ENCODE measurements at regions of chr13 and their contacts with region 1.

Region 1: DNA sequence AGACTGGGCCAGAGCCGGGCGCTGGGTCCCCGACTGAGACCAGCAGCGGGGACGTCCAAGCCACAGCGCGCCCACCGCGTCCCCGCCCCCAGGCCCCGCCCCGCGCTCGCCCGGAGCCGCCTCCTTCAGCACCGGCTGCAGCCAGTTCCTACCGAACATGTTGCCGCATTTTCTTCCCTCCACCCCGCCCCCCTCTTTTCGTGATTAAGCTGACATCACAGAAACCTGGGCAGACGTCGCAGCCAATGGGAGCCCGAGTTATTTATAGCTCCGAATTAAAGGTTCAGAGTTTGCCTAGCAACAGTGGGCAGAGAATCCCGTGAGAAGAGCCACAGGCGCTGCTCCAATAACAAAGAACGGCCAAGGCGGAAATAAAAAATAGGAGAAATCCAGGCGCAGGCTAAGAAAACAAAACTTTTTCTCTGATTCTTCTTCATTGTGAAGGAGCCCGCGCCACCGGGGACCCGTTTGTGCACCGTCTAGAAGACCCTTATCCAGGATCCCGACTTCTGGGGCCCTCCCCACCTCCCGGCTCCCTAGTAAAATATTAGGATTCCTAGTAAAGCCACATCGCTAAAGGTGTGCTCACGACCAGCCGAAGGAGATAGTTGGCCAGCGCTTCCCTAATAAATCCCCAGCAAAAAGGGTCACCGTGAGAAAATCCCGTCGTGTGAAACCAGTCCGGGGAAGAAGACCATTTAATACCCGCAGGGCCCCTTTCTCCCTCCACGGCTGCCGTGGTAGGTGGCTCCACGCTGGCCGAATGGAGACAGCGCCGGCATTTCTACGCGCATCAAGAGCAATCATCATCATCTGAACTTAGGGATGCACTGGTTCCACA is 61.7 kb downstream of the SERP2 start:
- DNase-seq: peak; percentile 83 to 94 (median 88)
- ATAC-seq: peak; percentile 90
- H3K4me3 ChIP-seq: peak overlapping the region; percentile 55
- H3K27ac ChIP-seq: peak overlapping the region; percentile 90
- H3K4me1 ChIP-seq: peaks cover 7 to 8% of the 10 kb centered on the region in 2 experiments; a peak in 3 of 5 replicates
- H3K27me3 ChIP-seq: no peaks in the 10 kb centered on the region
- CTCF ChIP-seq: no peak
- EP300 ChIP-seq: peak; percentile 37; the same call in 1 of the 2 replicates
- POLR2A ChIP-seq: peak; percentile 43; the same call in 1 of the 2 replicates
- RAD21 ChIP-seq: no peak

Region 2: DNA sequence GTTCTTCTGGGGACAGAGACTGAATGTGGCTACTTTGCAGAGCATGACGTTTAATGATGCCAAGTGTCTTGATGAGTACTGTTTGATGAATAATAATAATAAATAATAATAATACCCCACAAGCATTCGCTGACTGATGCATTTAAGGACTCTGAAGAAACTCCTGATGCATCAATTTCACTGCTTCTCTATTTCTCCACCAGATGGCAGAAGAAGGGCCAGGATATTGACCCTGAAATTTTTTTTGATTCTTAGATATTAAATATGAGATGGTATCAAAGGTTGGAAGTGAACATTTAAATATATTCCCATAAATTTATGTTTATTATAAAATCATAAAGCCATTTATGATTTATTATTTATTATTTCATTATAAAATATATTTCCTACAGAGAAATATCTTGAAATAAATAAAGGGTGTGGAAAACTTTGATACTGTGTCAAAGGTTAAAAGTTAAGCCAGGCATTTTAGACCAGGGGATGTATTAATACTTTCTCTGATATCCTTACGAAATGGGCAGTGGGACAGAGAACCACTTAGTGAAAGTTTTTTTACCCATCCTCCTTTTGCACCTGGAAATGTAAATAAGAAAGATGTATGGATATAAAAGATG is 384.8 kb before region 1 on chr13:
- CTCF ChIA-PET with region 1: interaction called, 13 read pairs
- POLR2A ChIA-PET with region 1: interaction called, 3 read pairs
- in situ Hi-C with region 1: no loop called
- intact Hi-C with region 1: no loop called
- DNase-seq: peak in 3 of 4 experiments; percentile 4 to 6 (median 6)
- ATAC-seq: no peak
- H3K4me3 ChIP-seq: no peak overlapping the region
- H3K27ac ChIP-seq: no peak overlapping the region
- H3K4me1 ChIP-seq: no peaks in the 10 kb centered on the region
- H3K27me3 ChIP-seq: no peaks in the 10 kb centered on the region; a peak in 1 of 5 replicates
- CTCF ChIP-seq: peak in 2 of 3 experiments; percentile 24 to 52; a peak in 2 of 6 replicates
- EP300 ChIP-seq: no peak
- POLR2A ChIP-seq: no peak
- RAD21 ChIP-seq: peak; percentile 45 to 54

Region 3: DNA sequence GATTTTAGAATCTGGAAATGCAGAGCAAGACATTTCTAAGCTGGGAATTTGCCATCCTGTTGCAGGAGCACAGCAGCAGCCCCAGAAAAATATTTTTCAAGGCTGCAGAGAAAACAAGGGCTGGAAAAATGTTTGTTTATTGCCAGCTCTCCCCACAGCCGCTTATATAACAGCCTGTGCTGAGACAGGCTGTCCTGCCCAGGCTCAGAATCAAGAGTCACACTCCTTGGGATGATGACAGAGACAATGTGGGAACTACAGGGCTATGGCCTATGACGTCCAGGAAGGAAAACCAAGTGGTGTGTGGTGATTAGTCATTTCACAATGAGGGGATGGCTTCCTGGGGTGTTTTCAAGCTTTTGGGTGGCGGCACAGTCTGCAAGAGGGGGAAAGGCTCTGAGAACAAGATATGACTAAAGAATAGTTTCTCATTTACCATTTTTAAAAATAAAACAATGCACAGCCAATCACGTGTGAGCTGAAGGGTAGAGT is 198.0 kb before region 1 on chr13:
- CTCF ChIA-PET with region 1: no interaction called
- POLR2A ChIA-PET with region 1: no interaction called
- in situ Hi-C with region 1: loop called (anchors 5 kb)
- intact Hi-C with region 1: no loop called
- DNase-seq: no peak
- ATAC-seq: no peak
- H3K4me3 ChIP-seq: no peak overlapping the region
- H3K27ac ChIP-seq: no peak overlapping the region
- H3K4me1 ChIP-seq: no peaks in the 10 kb centered on the region
- H3K27me3 ChIP-seq: peaks cover 8 to 13% of the 10 kb centered on the region in 2 experiments; a peak in 3 of 5 replicates
- CTCF ChIP-seq: no peak
- EP300 ChIP-seq: no peak
- POLR2A ChIP-seq: no peak
- RAD21 ChIP-seq: no peak

Region 4: DNA sequence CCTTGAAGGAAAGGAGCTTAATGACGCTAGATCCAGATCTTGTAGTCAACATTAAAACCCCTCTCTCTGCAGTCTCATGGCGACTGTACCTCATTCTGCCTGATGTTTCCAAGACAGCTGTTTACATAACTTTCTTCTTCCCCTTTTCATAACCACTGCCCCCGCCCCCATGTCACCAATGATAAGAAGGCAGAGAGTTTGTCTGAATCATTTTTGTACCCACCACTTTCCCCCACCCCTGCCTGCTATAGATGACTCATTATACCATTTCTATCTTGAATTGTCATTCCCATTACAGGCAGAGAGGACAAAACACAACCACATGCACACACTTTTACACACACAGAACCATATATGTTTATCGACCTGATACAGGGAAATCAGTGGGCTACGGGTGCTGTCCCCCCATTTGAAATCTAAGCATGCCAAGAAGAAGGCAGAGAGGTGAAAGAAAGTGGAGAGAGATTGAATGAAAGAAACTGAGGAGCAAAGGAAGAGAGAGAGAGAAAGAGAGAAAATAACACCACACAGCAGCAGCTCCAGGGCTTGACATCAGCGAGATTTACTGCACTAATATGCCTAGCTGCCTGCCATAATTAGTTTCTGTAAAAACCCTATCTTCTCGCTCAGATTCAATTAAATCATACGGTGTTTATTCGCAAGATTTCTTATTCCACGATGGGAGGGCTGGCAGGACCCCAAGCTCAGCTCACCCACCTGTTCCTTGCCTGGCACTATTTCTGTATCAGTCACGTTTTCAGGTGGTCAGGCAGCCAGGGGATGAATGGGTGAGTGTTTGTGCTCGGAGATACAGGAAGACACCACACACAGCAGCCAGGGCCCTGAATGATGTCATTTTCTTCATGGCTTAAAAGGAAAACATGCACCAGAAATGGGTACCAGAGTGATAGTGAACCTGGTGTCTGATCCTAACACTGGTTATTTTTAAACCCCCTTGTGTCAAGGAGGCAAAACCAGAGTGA is 176.0 kb before region 1 on chr13:
- CTCF ChIA-PET with region 1: no interaction called
- POLR2A ChIA-PET with region 1: no interaction called
- in situ Hi-C with region 1: no loop called
- intact Hi-C with region 1: loop called (anchors 5 kb)
- DNase-seq: peak; percentile 60 to 71 (median 66)
- ATAC-seq: peak; percentile 81
- H3K4me3 ChIP-seq: no peak overlapping the region; the same call in 1 of the 2 replicates
- H3K27ac ChIP-seq: peak overlapping the region; percentile 70; the same call in 2 of the 3 replicates
- H3K4me1 ChIP-seq: peaks cover 0 to 25% of the 10 kb centered on the region in 2 experiments; a peak in 4 of 5 replicates
- H3K27me3 ChIP-seq: no peaks in the 10 kb centered on the region
- CTCF ChIP-seq: no peak
- EP300 ChIP-seq: peak; percentile 69; the same call in 1 of the 2 replicates
- POLR2A ChIP-seq: no peak
- RAD21 ChIP-seq: no peak

Region 5: DNA sequence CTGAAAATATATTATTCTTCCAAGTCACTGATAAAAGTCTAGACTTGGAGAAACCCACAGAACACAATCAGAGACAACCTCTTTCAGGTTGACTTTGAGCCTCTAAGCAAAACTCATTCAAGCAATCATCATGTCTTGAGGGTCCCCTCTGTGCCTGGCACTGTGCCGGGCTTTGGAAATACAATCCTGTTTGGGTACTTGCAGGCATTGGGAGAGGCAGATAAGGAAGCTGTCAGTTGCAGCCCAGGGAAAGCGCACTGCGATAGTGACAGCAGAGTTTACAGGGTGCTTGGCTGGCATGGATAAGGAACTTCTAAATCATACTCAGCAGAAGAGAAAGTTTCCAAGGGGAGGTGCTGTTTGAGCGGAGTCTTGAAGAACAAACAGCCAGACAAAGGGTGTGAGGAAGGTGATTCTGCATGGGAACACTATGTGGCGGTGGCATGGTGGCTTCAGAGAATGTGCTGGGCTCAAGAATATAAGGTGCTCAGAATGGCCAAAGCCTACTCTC is 52.7 kb before region 1 on chr13:
- CTCF ChIA-PET with region 1: no interaction called
- POLR2A ChIA-PET with region 1: interaction called, 3 read pairs
- in situ Hi-C with region 1: no loop called
- intact Hi-C with region 1: loop called (anchors 1 kb)
- DNase-seq: peak; percentile 21 to 88 (median 42)
- ATAC-seq: peak; percentile 84
- H3K4me3 ChIP-seq: no peak overlapping the region
- H3K27ac ChIP-seq: no peak overlapping the region; the same call in 2 of the 3 replicates
- H3K4me1 ChIP-seq: peaks cover 21 to 35% of the 10 kb centered on the region in 2 experiments; a peak in 4 of 5 replicates
- H3K27me3 ChIP-seq: no peaks in the 10 kb centered on the region
- CTCF ChIP-seq: peak in 2 of 3 experiments; percentile 24 to 39; a peak in 3 of 6 replicates
- EP300 ChIP-seq: peak; percentile 93
- POLR2A ChIP-seq: no peak
- RAD21 ChIP-seq: peak; percentile 35 to 45

Region 6: GRCh38 chr13:44605721-44606120 is 170.4 kb after region 1 on chr13:
- CTCF ChIA-PET with region 1: no interaction called
- POLR2A ChIA-PET with region 1: no interaction called
- in situ Hi-C with region 1: no loop called
- intact Hi-C with region 1: no loop called
- DNase-seq: no peak
- ATAC-seq: no peak
- H3K4me3 ChIP-seq: no peak overlapping the region
- H3K27ac ChIP-seq: no peak overlapping the region
- H3K4me1 ChIP-seq: no peaks in the 10 kb centered on the region
- H3K27me3 ChIP-seq: no peaks in the 10 kb centered on the region; a peak in 1 of 5 replicates
- CTCF ChIP-seq: no peak
- EP300 ChIP-seq: no peak
- POLR2A ChIP-seq: no peak
- RAD21 ChIP-seq: no peak

Measured in K562 (cell line).